Lower leg skin (tissue), 4 donors: ENCODE measurements at regions of chr6 and their contacts with region 1.

Region 1: DNA sequence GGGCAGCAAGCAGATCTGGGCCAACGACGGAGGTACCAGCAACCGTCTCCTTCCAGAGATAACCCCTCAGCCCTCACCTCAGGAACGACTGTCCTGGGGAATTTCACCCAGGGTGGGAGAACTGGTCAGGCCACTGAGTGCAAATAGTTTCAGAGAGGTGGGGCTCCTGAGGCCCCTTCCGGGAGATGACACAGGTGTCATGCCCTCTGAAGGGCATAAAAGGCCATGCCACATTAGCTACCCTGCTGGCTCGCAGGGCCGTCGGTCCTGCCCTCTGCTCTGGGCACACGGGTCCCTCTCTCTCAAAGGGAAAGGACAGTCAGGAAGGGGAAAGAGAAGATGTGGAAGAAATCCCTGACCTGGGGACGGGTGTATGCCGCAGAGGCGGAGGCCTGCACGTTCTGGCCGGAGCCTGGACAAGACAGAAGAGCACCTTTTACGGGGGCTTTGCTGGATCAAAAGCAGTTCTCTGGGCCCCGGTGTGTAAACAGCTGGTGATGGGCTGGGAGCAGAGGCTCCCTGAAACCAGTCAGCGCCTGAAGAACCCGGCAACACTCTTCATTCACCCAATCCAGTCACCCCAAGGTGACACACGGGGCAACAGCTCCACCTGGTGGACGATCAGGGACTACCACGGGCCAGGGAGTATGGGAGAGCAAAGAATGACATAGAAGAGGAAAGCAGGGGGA is 6.4 kb upstream of the TAF8 start:
- DNase-seq: peak; percentile 81 to 97
- H3K4me3 ChIP-seq: no peak overlapping the region
- CTCF ChIP-seq: peak in 1 of 3 donors; percentile 94
- POLR2A ChIP-seq: no peak

Region 2: GRCh38 chr6:41779793-41780545 is 264.0 kb before region 1 on chr6 and contains the start of gene FRS3:
- intact Hi-C with region 1: loop called (anchors 5 kb)
- DNase-seq: peak; percentile 97 to 100
- H3K4me3 ChIP-seq: peak within 1 kb of the TSS; percentile 42
- CTCF ChIP-seq: peak in 1 of 3 donors; percentile 68
- POLR2A ChIP-seq: no peak
- total RNA-seq, gene FRS3: 0.79 to 4.2 (median 2.4) TPM

Region 3: GRCh38 chr6:41941280-41942066 is 102.5 kb before region 1 on chr6 and contains the start of gene CCND3:
- intact Hi-C with region 1: loop called (anchors 5 kb)
- DNase-seq: peak; percentile 80 to 96
- H3K4me3 ChIP-seq: peak within 1 kb of the TSS; percentile 58
- CTCF ChIP-seq: no peak
- POLR2A ChIP-seq: no peak
- total RNA-seq, gene CCND3: 130 to 169 (median 157) TPM